Ovary (tissue), 10 donors: ENCODE measurements at regions of chr3 and their contacts with region 1.

Region 1: GRCh38 chr3:46705022-46705530 is 3.9 kb downstream of the TMIE start:
- DNase-seq: peak; percentile 61 to 84 (median 82)
- H3K4me3 ChIP-seq: no peak overlapping the region
- H3K27ac ChIP-seq: no peak overlapping the region
- H3K4me1 ChIP-seq: peaks cover 4% of the 10 kb centered on the region
- H3K27me3 ChIP-seq: no peaks in the 10 kb centered on the region
- CTCF ChIP-seq: peak; percentile 90 to 96 (median 94)
- EP300 ChIP-seq: no peak
- POLR2A ChIP-seq: no peak

Region 2: DNA sequence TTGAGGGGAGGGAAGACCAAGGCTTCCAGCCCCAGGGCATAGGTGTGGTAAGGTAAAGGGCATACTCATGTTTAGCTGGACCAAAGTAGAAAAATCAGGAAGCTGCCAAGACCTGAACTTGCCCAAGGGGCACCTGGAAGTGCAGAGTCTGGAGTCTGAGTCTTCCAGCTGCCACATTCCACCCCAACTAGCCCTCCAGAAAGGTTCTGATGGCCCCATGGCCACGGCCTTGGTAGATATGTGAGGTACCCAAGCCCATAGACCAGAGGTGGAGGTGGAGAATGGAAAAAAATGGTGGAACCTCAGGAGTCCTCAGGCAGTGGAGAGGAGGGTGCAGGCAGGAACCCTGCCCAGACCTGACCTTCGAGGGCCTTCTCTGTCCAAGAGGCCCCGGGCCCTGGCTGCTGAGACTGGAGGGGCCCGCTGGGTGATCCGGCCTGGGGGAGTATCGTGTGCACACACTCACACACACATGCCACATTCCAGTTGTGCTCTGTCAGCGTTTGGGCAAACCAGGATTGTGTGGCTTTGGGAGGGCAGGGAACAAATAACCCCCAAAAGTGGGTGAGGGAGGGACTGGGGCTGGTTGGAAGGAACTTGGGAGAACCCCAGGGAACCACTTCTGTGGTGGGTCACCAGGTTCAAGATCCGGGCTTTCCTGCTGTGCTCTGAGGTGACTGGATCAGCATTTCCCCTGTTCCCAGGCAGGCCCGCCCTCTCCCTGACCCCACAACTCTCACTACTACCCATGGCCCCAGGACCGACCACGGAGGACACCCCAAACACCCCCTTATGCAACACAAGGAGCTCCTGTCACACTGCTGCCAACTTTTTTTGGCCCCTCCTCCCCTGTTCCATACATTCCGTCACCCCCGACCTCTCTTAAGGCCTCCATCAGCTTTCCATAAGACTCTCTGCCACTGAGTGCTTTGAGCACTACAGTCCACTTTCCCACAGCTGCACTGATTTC is 146.6 kb after region 1 on chr3:
- intact Hi-C with region 1: loop called in 1 of 4 experiments (anchors 5 kb)
- DNase-seq: peak in 1 of 5 donors; percentile 16
- H3K4me3 ChIP-seq: no peak overlapping the region
- H3K27ac ChIP-seq: no peak overlapping the region
- H3K4me1 ChIP-seq: peaks cover 10% of the 10 kb centered on the region
- H3K27me3 ChIP-seq: no peaks in the 10 kb centered on the region
- CTCF ChIP-seq: no peak
- EP300 ChIP-seq: no peak
- POLR2A ChIP-seq: no peak

Region 3: GRCh38 chr3:46895204-46895660 is 190.2 kb after region 1 on chr3:
- intact Hi-C with region 1: loop called in 3 of 4 experiments (anchors 5 kb)
- DNase-seq: peak; percentile 76 to 89 (median 85)
- H3K4me3 ChIP-seq: no peak overlapping the region
- H3K27ac ChIP-seq: no peak overlapping the region
- H3K4me1 ChIP-seq: peaks cover 7% of the 10 kb centered on the region
- H3K27me3 ChIP-seq: no peaks in the 10 kb centered on the region
- CTCF ChIP-seq: peak; percentile 74 to 94 (median 92)
- EP300 ChIP-seq: no peak
- POLR2A ChIP-seq: no peak

Region 4: GRCh38 chr3:46909535-46910442 is 204.7 kb after region 1 on chr3:
- intact Hi-C with region 1: loop called in 1 of 4 experiments (anchors 5 kb)
- DNase-seq: peak; percentile 82 to 91 (median 89)
- H3K4me3 ChIP-seq: no peak overlapping the region
- H3K27ac ChIP-seq: no peak overlapping the region
- H3K4me1 ChIP-seq: peaks cover 15% of the 10 kb centered on the region
- H3K27me3 ChIP-seq: no peaks in the 10 kb centered on the region
- CTCF ChIP-seq: peak; percentile 82 to 87 (median 83)
- EP300 ChIP-seq: no peak
- POLR2A ChIP-seq: no peak

Region 5: GRCh38 chr3:47009225-47010110 is 304.4 kb after region 1 on chr3:
- intact Hi-C with region 1: loop called in 1 of 4 experiments (anchors 10 kb)
- DNase-seq: peak; percentile 93 to 95 (median 94)
- H3K4me3 ChIP-seq: peak overlapping the region; percentile 76
- H3K27ac ChIP-seq: peak overlapping the region; percentile 35 to 82
- H3K4me1 ChIP-seq: peaks cover 4% of the 10 kb centered on the region
- H3K27me3 ChIP-seq: no peaks in the 10 kb centered on the region
- CTCF ChIP-seq: peak in 1 of 3 donors; percentile 7
- EP300 ChIP-seq: no peak
- POLR2A ChIP-seq: peak; percentile 91

Region 6: GRCh38 chr3:47324278-47324865 is 619.3 kb after region 1 on chr3:
- intact Hi-C with region 1: loop called (anchors 5 to 10 kb)
- DNase-seq: peak; percentile 46 to 73 (median 52)
- H3K4me3 ChIP-seq: no peak overlapping the region
- H3K27ac ChIP-seq: no peak overlapping the region
- H3K4me1 ChIP-seq: peaks cover 2% of the 10 kb centered on the region
- H3K27me3 ChIP-seq: no peaks in the 10 kb centered on the region
- CTCF ChIP-seq: peak; percentile 55 to 62 (median 62)
- EP300 ChIP-seq: no peak
- POLR2A ChIP-seq: no peak